ENCODE measurements at regions of chr3 and their contacts with region 1.

Region 1: GRCh38 chr3:30611613-30612436 is 5.4 kb downstream of the TGFBR2 start:
- DNase-seq: peak in 3 of 14 experiments; percentile 58 to 70 (median 62)
- ATAC-seq: peak; percentile 30
- H3K4me3 ChIP-seq: peak overlapping the region; percentile 73
- H3K4me3 Mint-ChIP-seq: peak overlapping the region; percentile 97
- H3K27ac ChIP-seq: peak overlapping the region; percentile 55 to 60
- H3K27ac Mint-ChIP-seq: peak overlapping the region; percentile 96
- H3K4me1 ChIP-seq: peaks cover 35% of the 10 kb centered on the region
- H3K4me1 Mint-ChIP-seq: peaks cover 70% of the 10 kb centered on the region
- H3K27me3 ChIP-seq: no peaks in the 10 kb centered on the region
- H3K27me3 Mint-ChIP-seq: no peaks in the 10 kb centered on the region
- CTCF ChIP-seq: no peak

Region 2: GRCh38 chr3:30319713-30320112 is 292.1 kb before region 1 on chr3:
- CTCF ChIA-PET with region 1: interaction called, 3 read pairs
- POLR2A ChIA-PET with region 1: interaction called, 5 read pairs
- intact Hi-C with region 1: loop called (anchors 2 to 5 kb)
- DNase-seq: peak in 13 of 14 experiments; percentile 4 to 73 (median 24)
- ATAC-seq: peak; percentile 97
- H3K4me3 ChIP-seq: no peak overlapping the region
- H3K4me3 Mint-ChIP-seq: no peak overlapping the region
- H3K27ac ChIP-seq: no peak overlapping the region
- H3K27ac Mint-ChIP-seq: peak overlapping the region; percentile 1
- H3K4me1 ChIP-seq: no peaks in the 10 kb centered on the region
- H3K4me1 Mint-ChIP-seq: peaks cover 13% of the 10 kb centered on the region
- H3K27me3 ChIP-seq: no peaks in the 10 kb centered on the region
- H3K27me3 Mint-ChIP-seq: no peaks in the 10 kb centered on the region
- CTCF ChIP-seq: peak; percentile 56

Region 3: DNA sequence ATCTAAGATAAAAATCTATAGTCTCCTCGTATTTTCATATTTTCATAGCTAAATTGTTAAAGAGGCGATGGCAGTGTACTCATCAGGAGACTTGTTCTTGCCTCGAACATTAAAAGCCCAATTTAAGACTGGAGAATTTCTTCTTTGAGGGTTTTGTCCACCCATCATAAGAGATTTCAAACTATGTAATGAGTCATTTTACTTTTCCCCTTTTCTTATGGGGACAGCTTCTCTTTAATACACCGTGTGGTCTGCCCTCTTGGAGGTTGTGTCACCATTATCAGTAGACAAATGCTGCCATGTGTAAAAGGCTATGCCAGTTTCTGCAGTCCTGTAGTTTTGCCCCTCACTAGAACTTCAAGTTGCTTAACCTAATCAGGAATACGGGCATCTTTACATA is 11.5 kb after region 1 on chr3:
- CTCF ChIA-PET with region 1: interaction called, 10 read pairs
- POLR2A ChIA-PET with region 1: interaction called, 80 read pairs
- intact Hi-C with region 1: loop called in 1 of 2 experiments (anchors 2 kb)
- DNase-seq: peak in 1 of 14 experiments; percentile 42
- ATAC-seq: no peak
- H3K4me3 ChIP-seq: no peak overlapping the region
- H3K4me3 Mint-ChIP-seq: peak overlapping the region; percentile 66
- H3K27ac ChIP-seq: peak overlapping the region; percentile 25 to 38
- H3K27ac Mint-ChIP-seq: peak overlapping the region; percentile 96
- H3K4me1 ChIP-seq: peaks cover 65% of the 10 kb centered on the region
- H3K4me1 Mint-ChIP-seq: peaks cover 98% of the 10 kb centered on the region
- H3K27me3 ChIP-seq: no peaks in the 10 kb centered on the region
- H3K27me3 Mint-ChIP-seq: no peaks in the 10 kb centered on the region
- CTCF ChIP-seq: no peak

Region 4: DNA sequence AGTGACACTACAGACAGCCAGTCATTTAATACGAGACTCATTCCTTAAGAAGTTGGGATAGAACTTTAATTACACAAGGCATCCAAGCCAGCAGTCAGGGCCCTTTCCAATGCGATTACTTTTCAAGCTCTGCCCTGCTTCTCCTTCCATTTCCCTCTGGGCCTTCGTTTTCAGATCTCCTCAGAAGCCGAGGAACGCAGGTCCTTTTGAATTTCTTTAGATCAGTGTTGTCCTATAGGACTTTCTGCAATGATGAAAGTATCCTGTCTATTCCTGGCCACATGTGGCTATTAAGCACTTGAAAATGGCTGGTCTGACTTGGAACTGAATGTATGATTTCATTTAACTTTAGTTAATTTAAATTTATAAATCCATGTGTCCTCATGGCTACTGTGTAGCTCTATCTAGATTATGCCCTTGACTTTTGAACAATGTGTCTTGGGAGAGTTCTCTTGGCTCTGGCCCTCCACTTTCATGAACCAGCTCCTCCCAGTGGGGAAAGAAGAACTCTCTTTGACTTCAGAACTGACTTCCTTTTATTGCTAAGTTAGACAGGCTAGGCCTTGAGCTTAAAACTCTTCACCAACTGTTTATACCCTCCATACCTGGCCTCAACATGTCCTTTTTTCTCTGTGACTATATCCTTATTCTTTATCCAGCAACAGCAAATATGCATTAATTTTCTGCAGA is 17.2 kb after region 1 on chr3:
- CTCF ChIA-PET with region 1: interaction called, 10 read pairs
- POLR2A ChIA-PET with region 1: interaction called, 31 read pairs
- intact Hi-C with region 1: loop called (anchors 2 kb)
- DNase-seq: peak in 4 of 14 experiments; percentile 43 to 75 (median 73)
- ATAC-seq: peak; percentile 32
- H3K4me3 ChIP-seq: no peak overlapping the region
- H3K4me3 Mint-ChIP-seq: peak overlapping the region; percentile 68
- H3K27ac ChIP-seq: peak overlapping the region; percentile 77 to 90
- H3K27ac Mint-ChIP-seq: peak overlapping the region; percentile 96
- H3K4me1 ChIP-seq: peaks cover 74% of the 10 kb centered on the region
- H3K4me1 Mint-ChIP-seq: peaks cover 100% of the 10 kb centered on the region
- H3K27me3 ChIP-seq: no peaks in the 10 kb centered on the region
- H3K27me3 Mint-ChIP-seq: no peaks in the 10 kb centered on the region
- CTCF ChIP-seq: peak; percentile 40

Region 5: GRCh38 chr3:30634761-30635735 is 23.2 kb after region 1 on chr3:
- CTCF ChIA-PET with region 1: interaction called, 7 read pairs
- POLR2A ChIA-PET with region 1: interaction called, 31 read pairs
- intact Hi-C with region 1: loop called (anchors 2 to 5 kb)
- DNase-seq: no peak
- ATAC-seq: peak; percentile 8
- H3K4me3 ChIP-seq: no peak overlapping the region
- H3K4me3 Mint-ChIP-seq: peak overlapping the region; percentile 42
- H3K27ac ChIP-seq: peak overlapping the region; percentile 57 to 77
- H3K27ac Mint-ChIP-seq: peak overlapping the region; percentile 96
- H3K4me1 ChIP-seq: peaks cover 77% of the 10 kb centered on the region
- H3K4me1 Mint-ChIP-seq: peaks cover 100% of the 10 kb centered on the region
- H3K27me3 ChIP-seq: no peaks in the 10 kb centered on the region
- H3K27me3 Mint-ChIP-seq: no peaks in the 10 kb centered on the region
- CTCF ChIP-seq: no peak

Region 6: DNA sequence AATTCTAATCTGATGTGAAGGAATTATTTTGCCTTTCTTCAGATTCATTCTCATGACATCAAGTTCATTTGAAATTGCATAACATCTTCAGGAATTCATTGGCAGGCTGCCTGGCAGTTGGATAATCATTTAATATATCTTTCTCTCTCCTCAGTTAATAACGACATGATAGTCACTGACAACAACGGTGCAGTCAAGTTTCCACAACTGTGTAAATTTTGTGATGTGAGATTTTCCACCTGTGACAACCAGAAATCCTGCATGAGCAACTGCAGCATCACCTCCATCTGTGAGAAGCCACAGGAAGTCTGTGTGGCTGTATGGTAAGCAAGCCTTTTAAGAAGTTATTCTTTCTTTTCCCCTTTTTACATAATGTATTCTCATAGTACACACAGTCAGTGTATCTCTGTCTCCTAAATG is 32.8 kb after region 1 on chr3:
- CTCF ChIA-PET with region 1: interaction called, 5 read pairs
- POLR2A ChIA-PET with region 1: interaction called, 43 read pairs
- intact Hi-C with region 1: loop called (anchors 5 kb)
- DNase-seq: peak in 10 of 14 experiments; percentile 26 to 87 (median 50)
- ATAC-seq: peak; percentile 62
- H3K4me3 ChIP-seq: peak overlapping the region; percentile 14
- H3K4me3 Mint-ChIP-seq: peak overlapping the region; percentile 79
- H3K27ac ChIP-seq: peak overlapping the region; percentile 72 to 76
- H3K27ac Mint-ChIP-seq: peak overlapping the region; percentile 96
- H3K4me1 ChIP-seq: peaks cover 85% of the 10 kb centered on the region
- H3K4me1 Mint-ChIP-seq: peaks cover 99% of the 10 kb centered on the region
- H3K27me3 ChIP-seq: no peaks in the 10 kb centered on the region
- H3K27me3 Mint-ChIP-seq: no peaks in the 10 kb centered on the region
- CTCF ChIP-seq: no peak

Region 7: DNA sequence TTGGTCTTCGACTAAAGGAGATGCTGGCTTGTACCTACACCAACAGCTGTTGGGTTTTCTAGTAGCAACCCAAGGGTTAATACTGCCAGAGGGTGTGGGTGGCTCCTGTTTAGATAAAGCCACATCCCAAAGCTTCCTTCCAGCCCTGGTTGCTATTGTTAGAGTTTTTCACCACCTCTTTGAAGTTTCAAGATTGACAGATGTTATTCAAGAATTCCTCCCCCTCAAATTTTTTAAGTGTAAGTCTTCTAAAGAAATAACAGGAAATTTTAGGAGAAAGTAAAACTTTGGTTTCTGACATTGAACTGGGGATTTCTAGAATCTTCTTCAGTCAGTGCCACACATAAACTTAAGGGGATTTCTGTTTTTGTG is 55.4 kb after region 1 on chr3:
- CTCF ChIA-PET with region 1: interaction called, 6 read pairs
- POLR2A ChIA-PET with region 1: interaction called, 62 read pairs
- intact Hi-C with region 1: no loop called
- DNase-seq: peak in 5 of 14 experiments; percentile 24 to 73 (median 66)
- ATAC-seq: peak; percentile 25
- H3K4me3 ChIP-seq: no peak overlapping the region
- H3K4me3 Mint-ChIP-seq: peak overlapping the region; percentile 66
- H3K27ac ChIP-seq: peak overlapping the region; percentile 46 to 71
- H3K27ac Mint-ChIP-seq: peak overlapping the region; percentile 86
- H3K4me1 ChIP-seq: peaks cover 63% of the 10 kb centered on the region
- H3K4me1 Mint-ChIP-seq: peaks cover 98% of the 10 kb centered on the region
- H3K27me3 ChIP-seq: no peaks in the 10 kb centered on the region
- H3K27me3 Mint-ChIP-seq: no peaks in the 10 kb centered on the region
- CTCF ChIP-seq: no peak

Measured in CD4-positive, alpha-beta T cell (primary cell).